Activated CD8-positive, alpha-beta T cell treated with anti-CD3 and anti-CD28 coated beads for 36 hours (primary cell): ENCODE measurements at regions of chr10 and their contacts with region 1.

Region 1: DNA sequence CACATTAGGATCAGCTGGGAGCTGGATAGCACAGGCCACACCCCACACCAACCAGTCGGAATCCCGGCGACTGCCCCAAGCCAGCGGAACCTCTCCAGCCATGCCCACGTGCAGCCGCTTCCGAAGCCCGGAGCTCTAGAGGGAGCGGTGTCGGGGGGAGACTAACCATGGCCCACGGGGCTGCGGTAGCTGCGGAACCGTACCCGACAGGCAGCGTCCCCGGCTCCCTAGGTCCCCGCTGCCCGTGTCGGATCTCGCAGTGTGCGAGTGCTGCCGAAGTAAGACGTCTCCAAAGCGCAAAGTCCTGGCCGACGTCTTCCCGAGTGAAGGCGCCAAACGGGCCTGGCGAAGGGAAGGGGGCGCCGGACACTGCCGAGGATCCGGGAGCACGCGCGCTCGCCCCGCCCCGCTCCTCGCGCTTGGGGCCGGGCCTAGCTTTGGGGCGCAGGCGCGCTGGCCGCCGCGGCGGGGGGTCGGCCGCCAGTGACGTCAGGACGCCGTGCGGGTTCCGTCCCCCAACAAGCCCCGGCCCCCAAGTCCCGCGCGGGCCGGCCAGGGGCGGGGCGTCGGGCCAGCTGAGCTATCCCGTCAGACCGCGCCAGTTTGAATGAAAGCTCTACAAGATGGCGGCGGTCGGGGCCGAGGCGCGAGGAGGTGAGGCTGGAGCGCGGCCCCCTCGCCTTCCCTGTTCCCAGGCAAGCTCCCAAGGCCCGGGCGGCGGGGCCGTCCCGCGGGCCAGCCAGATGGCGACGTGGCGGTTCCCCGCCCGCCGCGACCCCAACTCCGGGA is at the start of gene SUV39H2:
- DNase-seq: peak; percentile 95
- ATAC-seq: peak; percentile 93
- H3K4me3 Mint-ChIP-seq: peak within 1 kb of the TSS; percentile 96
- H3K27ac Mint-ChIP-seq: peak within 1 kb of the TSS; percentile 93
- H3K4me1 Mint-ChIP-seq: peaks cover 40% of the 10 kb centered on the region
- H3K27me3 Mint-ChIP-seq: no peaks in the 10 kb centered on the region
- CTCF ChIP-seq: no peak
- total RNA-seq, gene SUV39H2: 40.9 to 45.8 TPM

Region 2: DNA sequence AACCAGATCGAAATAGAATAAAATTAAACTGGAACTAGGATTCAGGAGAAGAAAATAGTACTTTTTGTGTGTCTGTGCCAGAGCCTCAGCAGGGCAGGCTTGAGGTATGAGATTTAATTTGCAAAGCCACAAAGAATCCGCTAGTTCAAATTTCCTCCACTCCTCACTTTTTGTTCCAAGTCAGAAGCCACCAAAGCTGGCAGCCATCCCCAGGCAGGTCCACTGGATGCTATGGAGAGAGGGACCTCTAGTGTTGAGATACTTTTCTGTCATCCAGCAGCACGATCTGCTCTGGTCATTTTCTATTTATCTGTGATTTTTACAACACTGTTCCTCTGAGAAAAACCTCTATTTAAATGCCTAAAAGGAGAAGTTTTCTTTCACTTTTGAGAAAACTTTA is 399.9 kb before region 1 on chr10:
- CTCF ChIA-PET with region 1: no interaction called
- POLR2A ChIA-PET with region 1: no interaction called
- intact Hi-C with region 1: no loop called
- DNase-seq: peak; percentile 35
- ATAC-seq: peak; percentile 65
- H3K4me3 Mint-ChIP-seq: no peak overlapping the region
- H3K27ac Mint-ChIP-seq: no peak overlapping the region
- H3K4me1 Mint-ChIP-seq: no peaks in the 10 kb centered on the region
- H3K27me3 Mint-ChIP-seq: peaks cover 6% of the 10 kb centered on the region
- CTCF ChIP-seq: peak; percentile 56

Region 3: DNA sequence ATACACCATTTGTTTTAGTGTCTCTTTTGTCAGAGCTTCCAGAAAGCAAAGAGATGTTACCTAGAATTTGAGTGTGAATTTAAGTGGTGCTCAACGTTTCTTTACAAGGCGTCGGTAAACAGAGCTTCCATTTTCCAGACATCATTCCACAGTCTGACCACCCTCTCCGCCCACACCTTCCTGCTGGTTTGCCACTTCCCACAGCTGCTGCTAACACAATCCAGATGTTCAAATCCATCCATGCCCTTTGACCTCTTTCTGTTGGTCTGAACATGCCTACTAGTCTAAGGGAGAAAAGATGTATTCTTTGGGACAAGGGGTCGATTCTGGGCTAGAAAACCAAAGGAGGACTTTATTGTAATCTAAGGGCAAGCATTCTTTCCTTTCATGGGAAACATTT is 189.9 kb before region 1 on chr10:
- CTCF ChIA-PET with region 1: no interaction called
- POLR2A ChIA-PET with region 1: no interaction called
- intact Hi-C with region 1: no loop called
- DNase-seq: no peak
- ATAC-seq: no peak
- H3K4me3 Mint-ChIP-seq: no peak overlapping the region
- H3K27ac Mint-ChIP-seq: no peak overlapping the region
- H3K4me1 Mint-ChIP-seq: peaks cover 10% of the 10 kb centered on the region
- H3K27me3 Mint-ChIP-seq: no peaks in the 10 kb centered on the region
- CTCF ChIP-seq: no peak

Region 4: GRCh38 chr10:14889318-14889717 is 10.9 kb after region 1 on chr10:
- CTCF ChIA-PET with region 1: interaction called, 5 read pairs
- POLR2A ChIA-PET with region 1: interaction called, 26 read pairs
- intact Hi-C with region 1: no loop called
- DNase-seq: no peak
- ATAC-seq: peak; percentile 61
- H3K4me3 Mint-ChIP-seq: no peak overlapping the region
- H3K27ac Mint-ChIP-seq: no peak overlapping the region
- H3K4me1 Mint-ChIP-seq: peaks cover 7% of the 10 kb centered on the region
- H3K27me3 Mint-ChIP-seq: no peaks in the 10 kb centered on the region
- CTCF ChIP-seq: peak; percentile 56

Region 5: GRCh38 chr10:14918964-14919363 is 40.5 kb after region 1 on chr10:
- CTCF ChIA-PET with region 1: no interaction called
- POLR2A ChIA-PET with region 1: no interaction called
- intact Hi-C with region 1: no loop called
- DNase-seq: no peak
- ATAC-seq: no peak
- H3K4me3 Mint-ChIP-seq: no peak overlapping the region
- H3K27ac Mint-ChIP-seq: no peak overlapping the region
- H3K4me1 Mint-ChIP-seq: peaks cover 11% of the 10 kb centered on the region
- H3K27me3 Mint-ChIP-seq: no peaks in the 10 kb centered on the region
- CTCF ChIP-seq: no peak

Region 6: GRCh38 chr10:14954001-14954770 is 75.7 kb after region 1 on chr10 and contains the start of gene DCLRE1C:
- CTCF ChIA-PET with region 1: interaction called, 3 read pairs
- POLR2A ChIA-PET with region 1: interaction called, 30 read pairs
- intact Hi-C with region 1: no loop called
- DNase-seq: peak; percentile 93
- ATAC-seq: peak; percentile 94
- H3K4me3 Mint-ChIP-seq: peak within 1 kb of the TSS; percentile 94
- H3K27ac Mint-ChIP-seq: peak within 1 kb of the TSS; percentile 98
- H3K4me1 Mint-ChIP-seq: peaks cover 43% of the 10 kb centered on the region
- H3K27me3 Mint-ChIP-seq: no peaks in the 10 kb centered on the region
- CTCF ChIP-seq: no peak
- total RNA-seq, gene DCLRE1C: 15.0 to 17.5 TPM

Region 7: GRCh38 chr10:14982744-14983143 is 104.3 kb after region 1 on chr10:
- CTCF ChIA-PET with region 1: no interaction called
- POLR2A ChIA-PET with region 1: no interaction called
- intact Hi-C with region 1: no loop called
- DNase-seq: no peak
- ATAC-seq: no peak
- H3K4me3 Mint-ChIP-seq: no peak overlapping the region
- H3K27ac Mint-ChIP-seq: no peak overlapping the region
- H3K4me1 Mint-ChIP-seq: no peaks in the 10 kb centered on the region
- H3K27me3 Mint-ChIP-seq: no peaks in the 10 kb centered on the region
- CTCF ChIP-seq: no peak